ENCODE measurements at regions of chr3 and their contacts with region 1.

Region 1: DNA sequence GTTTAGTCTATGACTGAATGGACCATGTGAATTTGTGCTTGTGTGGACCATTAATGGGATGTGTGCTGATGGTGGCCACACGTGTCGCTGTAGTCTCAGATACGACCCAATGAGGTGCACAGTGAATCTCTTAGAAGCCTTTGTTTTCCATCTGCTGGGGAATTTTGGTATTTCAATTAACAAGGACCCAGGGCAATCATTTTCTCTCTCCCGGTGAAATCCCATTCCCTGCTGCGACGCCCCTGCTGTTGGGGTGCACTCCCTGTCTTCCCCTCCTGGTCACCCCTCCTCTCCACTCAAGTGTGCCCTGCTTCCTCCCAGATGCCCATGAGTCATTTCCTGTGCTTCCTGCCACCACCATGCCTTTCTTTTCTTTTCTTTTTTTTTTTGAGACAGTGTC is 32.7 kb downstream of the EBLN2 start:
- DNase-seq: no peak
- ATAC-seq: no peak

Region 2: DNA sequence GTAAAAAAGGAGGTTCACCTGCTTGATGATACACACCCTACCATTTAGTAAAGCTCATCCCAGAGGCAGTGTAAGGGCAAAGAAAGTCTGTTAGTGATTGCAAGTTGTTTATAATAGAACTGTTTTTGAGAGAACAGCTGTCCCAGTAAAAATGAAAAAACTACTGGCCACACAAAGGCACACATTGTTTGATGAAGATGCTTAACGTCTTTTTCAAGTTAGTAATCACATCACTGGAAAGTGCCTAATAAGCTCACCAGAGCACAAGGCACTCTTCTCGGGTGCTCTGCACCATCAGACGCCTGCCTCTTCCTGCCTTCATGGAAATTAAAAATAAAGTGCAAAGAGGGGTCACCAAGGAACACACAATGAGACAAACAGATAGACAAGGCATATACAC is 343.7 kb after region 1 on chr3:
- intact Hi-C with region 1: loop called (anchors 5 kb)
- DNase-seq: no peak
- ATAC-seq: peak; percentile 88

Region 3: DNA sequence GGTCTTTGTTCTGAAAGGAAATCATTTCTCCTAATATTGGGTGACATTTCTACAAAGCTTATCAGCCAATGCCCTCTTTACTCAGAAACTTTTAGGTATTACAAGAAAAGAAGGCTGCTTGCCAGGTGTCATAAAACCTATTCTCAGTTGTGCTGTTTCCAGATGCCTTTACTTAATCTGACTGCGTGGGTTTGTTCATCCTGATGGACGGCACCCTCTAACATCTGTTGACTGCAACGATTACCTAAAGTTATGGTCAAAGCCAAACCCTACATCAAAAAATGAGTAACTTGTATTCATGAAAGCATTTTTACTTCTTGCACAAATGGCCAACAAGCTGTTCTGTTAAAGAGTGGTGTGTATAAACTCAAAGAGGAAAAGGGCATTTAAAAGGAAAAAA is 738.3 kb after region 1 on chr3:
- intact Hi-C with region 1: loop called (anchors 10 kb)
- DNase-seq: no peak
- ATAC-seq: no peak